Activated CD4-positive, alpha-beta T cell treated with anti-CD3 and anti-CD28 coated beads for 36 hours (primary cell): ENCODE measurements at regions of chr2 and their contacts with region 1.

Region 1: DNA sequence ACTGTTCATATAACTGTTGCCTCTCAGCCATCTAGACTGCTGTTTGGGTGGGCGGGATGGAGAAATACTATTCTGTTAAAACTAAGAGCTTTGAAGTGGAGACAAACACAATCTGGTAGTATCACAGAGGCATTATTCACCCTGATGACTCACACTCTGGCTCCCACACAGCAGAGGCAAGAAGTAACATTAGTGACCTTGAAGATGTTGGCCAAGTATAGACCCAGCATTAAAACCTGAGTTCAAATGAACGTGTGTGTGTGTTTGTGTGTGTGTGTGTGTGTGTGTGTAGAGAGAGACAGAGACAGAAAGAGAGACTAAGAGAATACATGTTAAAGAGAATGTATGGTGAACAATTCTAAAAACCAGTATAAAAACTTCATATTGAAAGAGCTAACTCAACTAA is 22.5 kb upstream of the ACVR1 start:
- DNase-seq: peak; percentile 86
- ATAC-seq: peak; percentile 73
- H3K4me3 Mint-ChIP-seq: peak overlapping the region; percentile 69
- H3K27ac Mint-ChIP-seq: peak overlapping the region; percentile 100
- H3K4me1 Mint-ChIP-seq: peaks cover 83% of the 10 kb centered on the region
- H3K27me3 Mint-ChIP-seq: no peaks in the 10 kb centered on the region

Region 2: GRCh38 chr2:157261199-157261783 is 637.3 kb before region 1 on chr2:
- CTCF ChIA-PET with region 1: no interaction called
- POLR2A ChIA-PET with region 1: interaction called, 5 read pairs
- intact Hi-C with region 1: loop called in 1 of 2 experiments (anchors 1 kb)
- DNase-seq: peak; percentile 84
- ATAC-seq: peak; percentile 79
- H3K4me3 Mint-ChIP-seq: peak overlapping the region; percentile 4
- H3K27ac Mint-ChIP-seq: peak overlapping the region; percentile 26
- H3K4me1 Mint-ChIP-seq: peaks cover 38% of the 10 kb centered on the region
- H3K27me3 Mint-ChIP-seq: peaks cover 12% of the 10 kb centered on the region

Region 3: GRCh38 chr2:157395811-157396210 is 502.8 kb before region 1 on chr2:
- CTCF ChIA-PET with region 1: no interaction called
- POLR2A ChIA-PET with region 1: no interaction called
- intact Hi-C with region 1: no loop called
- DNase-seq: no peak
- ATAC-seq: no peak
- H3K4me3 Mint-ChIP-seq: no peak overlapping the region
- H3K27ac Mint-ChIP-seq: no peak overlapping the region
- H3K4me1 Mint-ChIP-seq: peaks cover 7% of the 10 kb centered on the region
- H3K27me3 Mint-ChIP-seq: no peaks in the 10 kb centered on the region

Region 4: GRCh38 chr2:157413326-157414035 is 485.1 kb before region 1 on chr2:
- CTCF ChIA-PET with region 1: no interaction called
- POLR2A ChIA-PET with region 1: interaction called, 11 read pairs
- intact Hi-C with region 1: loop called in 1 of 2 experiments (anchors 2 kb)
- DNase-seq: peak; percentile 64
- ATAC-seq: peak; percentile 67
- H3K4me3 Mint-ChIP-seq: peak overlapping the region; percentile 63
- H3K27ac Mint-ChIP-seq: peak overlapping the region; percentile 100
- H3K4me1 Mint-ChIP-seq: peaks cover 89% of the 10 kb centered on the region
- H3K27me3 Mint-ChIP-seq: no peaks in the 10 kb centered on the region

Region 5: GRCh38 chr2:157480182-157480961 is 418.2 kb before region 1 on chr2:
- CTCF ChIA-PET with region 1: interaction called, 5 read pairs
- POLR2A ChIA-PET with region 1: interaction called, 10 read pairs
- intact Hi-C with region 1: loop called in 1 of 2 experiments (anchors 1 kb)
- DNase-seq: peak; percentile 81
- ATAC-seq: peak; percentile 71
- H3K4me3 Mint-ChIP-seq: peak overlapping the region; percentile 64
- H3K27ac Mint-ChIP-seq: peak overlapping the region; percentile 95
- H3K4me1 Mint-ChIP-seq: peaks cover 86% of the 10 kb centered on the region
- H3K27me3 Mint-ChIP-seq: no peaks in the 10 kb centered on the region

Region 6: GRCh38 chr2:157732548-157732963 is 166.0 kb before region 1 on chr2:
- CTCF ChIA-PET with region 1: no interaction called
- POLR2A ChIA-PET with region 1: no interaction called
- intact Hi-C with region 1: no loop called
- DNase-seq: no peak
- ATAC-seq: no peak
- H3K4me3 Mint-ChIP-seq: no peak overlapping the region
- H3K27ac Mint-ChIP-seq: no peak overlapping the region
- H3K4me1 Mint-ChIP-seq: peaks cover 3% of the 10 kb centered on the region
- H3K27me3 Mint-ChIP-seq: no peaks in the 10 kb centered on the region

Region 7: DNA sequence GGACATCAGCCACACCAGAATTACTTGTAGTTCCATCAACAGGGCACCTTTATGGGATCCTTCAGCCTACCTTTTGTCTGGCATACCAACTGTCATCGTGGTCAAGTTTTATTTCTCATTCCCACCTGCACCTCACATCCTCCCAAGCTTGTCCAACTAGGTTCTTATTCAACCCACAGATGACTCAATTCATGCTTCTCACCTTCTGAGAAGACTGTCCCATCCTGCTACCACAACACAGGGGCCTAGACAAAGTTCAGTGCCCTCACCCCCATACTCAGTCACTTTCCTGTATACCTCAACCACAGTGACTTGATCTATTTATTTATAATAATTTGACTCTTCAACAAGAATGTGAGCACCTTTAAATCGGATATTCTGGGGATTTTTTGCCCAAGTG is 155.5 kb before region 1 on chr2:
- CTCF ChIA-PET with region 1: no interaction called
- POLR2A ChIA-PET with region 1: no interaction called
- intact Hi-C with region 1: no loop called
- DNase-seq: peak; percentile 29
- ATAC-seq: peak; percentile 87
- H3K4me3 Mint-ChIP-seq: no peak overlapping the region
- H3K27ac Mint-ChIP-seq: peak overlapping the region; percentile 4
- H3K4me1 Mint-ChIP-seq: peaks cover 28% of the 10 kb centered on the region
- H3K27me3 Mint-ChIP-seq: no peaks in the 10 kb centered on the region

Region 8: GRCh38 chr2:157857881-157858280 is 40.7 kb before region 1 on chr2:
- CTCF ChIA-PET with region 1: interaction called, 3 read pairs
- POLR2A ChIA-PET with region 1: interaction called, 10 read pairs
- intact Hi-C with region 1: loop called in 1 of 2 experiments (anchors 1 kb)
- DNase-seq: no peak
- ATAC-seq: no peak
- H3K4me3 Mint-ChIP-seq: no peak overlapping the region
- H3K27ac Mint-ChIP-seq: peak overlapping the region; percentile 11
- H3K4me1 Mint-ChIP-seq: peaks cover 32% of the 10 kb centered on the region
- H3K27me3 Mint-ChIP-seq: no peaks in the 10 kb centered on the region

Region 9: DNA sequence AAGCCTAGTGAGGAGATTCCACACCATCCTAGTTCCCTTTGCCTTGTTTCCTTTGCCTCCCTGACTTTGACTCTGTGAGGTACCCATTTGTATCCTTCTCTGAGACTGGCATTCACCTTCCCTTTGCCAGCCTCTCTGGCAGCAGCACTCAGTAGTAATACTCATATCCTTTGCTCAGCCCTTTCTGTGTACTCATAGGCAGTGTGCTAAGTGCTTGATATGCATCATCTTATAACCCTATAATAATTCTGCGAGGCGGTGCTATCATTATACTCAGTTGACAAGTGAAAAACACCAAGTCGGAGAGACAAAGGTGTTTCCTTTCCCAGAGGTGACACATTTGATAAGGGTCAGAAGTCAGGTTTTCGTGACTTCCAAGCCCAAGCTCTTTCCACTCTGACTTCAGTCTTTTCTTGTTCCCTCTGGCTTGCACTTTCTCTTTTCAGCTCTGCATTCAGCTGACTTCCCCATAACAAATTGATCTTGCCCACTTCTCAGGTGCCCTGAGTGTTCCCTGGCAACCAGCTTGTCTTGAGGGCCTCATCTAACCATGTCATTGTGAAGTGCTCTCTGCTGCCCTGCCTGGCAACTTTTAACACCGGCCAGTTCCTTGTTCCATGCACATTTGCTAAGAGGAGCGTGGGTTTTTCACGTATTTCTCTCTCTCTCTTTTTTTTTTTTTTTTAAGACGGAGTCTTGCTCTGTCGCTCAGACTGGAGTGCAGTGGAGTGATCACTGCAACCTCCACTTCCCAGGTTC is 108.5 kb after region 1 on chr2:
- CTCF ChIA-PET with region 1: interaction called, 5 read pairs
- POLR2A ChIA-PET with region 1: no interaction called
- intact Hi-C with region 1: loop called (anchors 1 to 2 kb)
- DNase-seq: peak; percentile 44
- ATAC-seq: peak; percentile 82
- H3K4me3 Mint-ChIP-seq: no peak overlapping the region
- H3K27ac Mint-ChIP-seq: no peak overlapping the region
- H3K4me1 Mint-ChIP-seq: peaks cover 18% of the 10 kb centered on the region
- H3K27me3 Mint-ChIP-seq: peaks cover 6% of the 10 kb centered on the region

Region 10: GRCh38 chr2:158049129-158049855 is 150.7 kb after region 1 on chr2:
- CTCF ChIA-PET with region 1: no interaction called
- POLR2A ChIA-PET with region 1: no interaction called
- intact Hi-C with region 1: no loop called
- DNase-seq: no peak
- ATAC-seq: no peak
- H3K4me3 Mint-ChIP-seq: no peak overlapping the region
- H3K27ac Mint-ChIP-seq: no peak overlapping the region
- H3K4me1 Mint-ChIP-seq: no peaks in the 10 kb centered on the region
- H3K27me3 Mint-ChIP-seq: no peaks in the 10 kb centered on the region